ENCODE measurements at regions of chr2 and their contacts with region 1.

Region 1: GRCh38 chr2:224435824-224436223 is 33.9 kb upstream of the FAM124B start:
- DNase-seq: no peak
- H3K4me3 ChIP-seq: no peak overlapping the region
- H3K27me3 ChIP-seq: peaks cover 8% of the 10 kb centered on the region
- CTCF ChIP-seq: no peak

Region 2: DNA sequence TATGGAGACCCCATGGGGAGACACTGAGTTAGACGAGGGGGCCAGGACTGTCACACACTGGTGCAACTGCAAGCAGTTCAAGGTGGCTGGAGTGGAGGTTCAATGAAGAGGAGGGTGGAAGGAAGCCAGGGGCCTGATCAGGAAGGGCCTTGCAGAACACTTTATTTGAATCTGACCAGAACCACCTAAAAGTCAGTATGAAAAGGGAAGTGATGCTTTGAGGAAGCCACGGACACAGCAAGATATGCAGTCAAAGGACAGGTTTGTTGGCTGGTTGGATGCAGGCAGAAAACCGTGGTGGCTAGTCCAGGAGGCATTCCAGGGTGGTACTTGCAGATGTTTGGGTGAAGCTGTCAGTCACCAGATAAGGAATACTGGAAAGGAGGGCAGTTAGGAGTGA is 30.4 kb before region 1 on chr2:
- CTCF ChIA-PET with region 1: no interaction called
- POLR2A ChIA-PET with region 1: no interaction called
- DNase-seq: no peak
- H3K4me3 ChIP-seq: no peak overlapping the region
- H3K27me3 ChIP-seq: no peaks in the 10 kb centered on the region; the same call in 1 of the 2 replicates
- CTCF ChIP-seq: no peak

Region 3: DNA sequence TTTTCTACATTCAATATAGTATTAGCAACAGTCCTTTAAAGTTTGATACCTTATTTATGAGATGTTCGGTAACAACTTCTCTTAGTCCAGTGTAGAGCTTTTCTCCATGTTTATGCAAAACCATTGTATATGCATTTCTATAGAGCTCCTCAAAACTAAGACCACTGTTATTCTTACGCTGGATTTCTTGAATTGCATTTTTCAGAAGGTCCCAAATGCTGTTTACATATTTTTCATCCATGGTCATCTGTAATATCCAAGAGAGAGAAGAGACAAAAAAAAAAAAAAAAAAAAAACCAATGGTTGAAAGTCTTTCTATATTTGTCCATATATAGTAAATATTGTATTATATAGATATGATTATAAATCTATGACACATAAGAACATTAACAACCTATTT is 121.8 kb after region 1 on chr2:
- CTCF ChIA-PET with region 1: no interaction called
- POLR2A ChIA-PET with region 1: interaction called, 25 read pairs
- DNase-seq: no peak
- H3K4me3 ChIP-seq: no peak overlapping the region
- H3K27me3 ChIP-seq: no peaks in the 10 kb centered on the region
- CTCF ChIP-seq: no peak

Measured in BJ (cell line).